Panc1 (cell line): ENCODE measurements at regions of chr5 and their contacts with region 1.

Region 1: GRCh38 chr5:151115274-151115905 is 34.6 kb upstream of the TNIP1 start:
- DNase-seq: no peak
- ATAC-seq: peak; percentile 91
- H3K4me3 ChIP-seq: no peak overlapping the region
- H3K27ac ChIP-seq: no peak overlapping the region
- H3K4me1 ChIP-seq: no peaks in the 10 kb centered on the region
- H3K27me3 ChIP-seq: no peaks in the 10 kb centered on the region
- CTCF ChIP-seq: peak; percentile 97

Region 2: DNA sequence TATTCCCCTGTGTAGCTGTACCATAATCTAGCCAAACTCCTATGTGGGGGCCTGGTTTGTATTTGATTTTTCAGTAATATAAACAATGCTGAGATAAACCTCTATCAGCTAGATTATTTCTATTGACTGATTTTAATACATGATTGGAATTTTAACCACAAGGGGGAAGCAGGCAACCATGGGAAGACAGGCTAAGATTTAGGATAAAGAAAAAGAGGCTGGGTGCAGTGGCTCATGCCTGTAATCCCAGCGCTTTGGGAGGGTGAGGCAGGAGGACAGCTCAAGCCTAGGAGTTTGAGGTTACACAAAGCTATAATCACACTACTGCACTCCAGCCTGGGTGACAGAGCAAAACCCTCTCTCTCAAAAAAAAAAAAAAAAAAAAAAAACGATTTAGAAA is 113.1 kb before region 1 on chr5:
- CTCF ChIA-PET with region 1: interaction called, 17 read pairs
- POLR2A ChIA-PET with region 1: no interaction called
- in situ Hi-C with region 1: no loop called
- intact Hi-C with region 1: loop called (anchors 1 kb)
- DNase-seq: no peak
- ATAC-seq: peak; percentile 60
- H3K4me3 ChIP-seq: no peak overlapping the region
- H3K27ac ChIP-seq: no peak overlapping the region
- H3K4me1 ChIP-seq: no peaks in the 10 kb centered on the region
- H3K27me3 ChIP-seq: no peaks in the 10 kb centered on the region
- CTCF ChIP-seq: peak; percentile 73

Region 3: DNA sequence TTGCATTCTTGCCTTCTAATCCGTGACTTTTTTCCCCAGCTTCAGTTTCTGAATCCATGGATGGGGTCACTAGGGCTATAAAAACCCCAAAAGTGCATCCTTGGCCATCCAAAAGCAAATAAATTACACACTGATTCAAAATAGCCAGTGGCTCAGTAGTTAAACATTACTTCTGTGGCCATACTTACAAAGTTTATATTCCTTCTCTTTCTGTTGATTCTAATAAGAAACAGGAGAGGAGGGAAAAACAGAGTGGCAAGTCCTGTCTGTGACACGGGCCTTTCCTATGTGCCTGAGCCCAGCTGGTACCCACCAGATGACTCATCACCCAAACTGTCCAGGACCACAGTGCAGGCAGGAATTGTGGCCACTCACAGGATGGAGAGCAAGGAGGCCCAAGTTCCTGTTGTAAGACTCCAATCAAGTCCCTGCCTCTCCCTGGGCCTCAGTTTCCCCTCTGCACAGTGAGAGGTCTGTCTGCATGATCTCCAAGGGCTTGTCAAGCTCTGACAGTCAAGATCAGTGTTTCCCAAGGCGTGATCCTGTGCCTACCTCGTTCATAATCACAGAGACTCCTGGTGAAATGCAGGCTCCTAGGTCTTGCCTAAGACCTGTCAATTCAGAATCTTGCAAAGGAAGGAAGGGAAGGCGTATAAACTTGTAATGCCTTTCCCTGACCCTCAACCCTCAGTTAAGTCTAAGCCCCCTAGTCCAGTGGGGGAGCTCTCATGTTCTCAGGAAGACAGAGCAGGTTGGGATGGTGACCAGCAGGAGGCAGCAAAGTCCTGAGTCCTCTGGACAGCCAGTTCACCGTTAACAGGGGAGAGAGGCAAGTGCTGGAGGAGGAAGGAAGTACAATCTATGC is 64.1 kb before region 1 on chr5:
- CTCF ChIA-PET with region 1: interaction called, 56 read pairs
- POLR2A ChIA-PET with region 1: interaction called, 3 read pairs
- in situ Hi-C with region 1: no loop called
- intact Hi-C with region 1: loop called (anchors 1 kb)
- DNase-seq: no peak
- ATAC-seq: peak; percentile 91
- H3K4me3 ChIP-seq: no peak overlapping the region
- H3K27ac ChIP-seq: no peak overlapping the region
- H3K4me1 ChIP-seq: no peaks in the 10 kb centered on the region
- H3K27me3 ChIP-seq: no peaks in the 10 kb centered on the region
- CTCF ChIP-seq: peak; percentile 89

Region 4: DNA sequence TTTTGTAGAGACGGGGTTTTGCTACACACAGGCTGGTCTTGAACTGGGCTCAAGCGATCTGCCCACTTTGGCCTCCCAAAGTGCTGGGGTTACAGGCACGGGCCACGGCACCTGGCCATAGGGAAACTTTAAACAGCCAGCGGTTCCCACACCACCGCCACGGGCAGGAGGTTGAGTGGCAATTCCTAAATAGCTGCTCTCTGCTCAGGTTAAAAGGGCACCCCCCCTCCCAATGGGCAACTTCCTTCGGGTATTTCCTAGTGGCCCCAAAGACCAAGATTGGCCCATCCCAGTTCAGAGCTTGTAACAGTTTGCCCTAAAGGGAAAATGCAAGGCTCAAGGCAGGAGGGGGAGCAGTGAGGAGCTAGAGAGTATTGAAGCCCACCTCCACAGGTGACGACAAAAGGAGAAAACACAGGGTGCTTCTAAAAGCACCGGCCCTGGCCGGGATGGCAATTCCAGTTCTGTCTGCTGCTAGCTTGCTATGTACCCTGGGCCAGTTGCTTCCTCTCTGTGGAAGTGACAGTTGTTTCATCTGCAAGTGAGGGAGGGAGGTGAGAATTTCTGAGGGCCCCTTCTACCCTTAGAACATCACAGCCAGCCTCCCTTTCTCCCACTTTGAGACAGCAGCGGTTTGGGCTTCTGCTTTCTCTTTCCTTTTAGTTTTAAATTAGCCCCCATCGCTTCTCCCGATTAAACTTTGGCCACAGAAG is 17.4 kb before region 1 on chr5:
- CTCF ChIA-PET with region 1: no interaction called
- POLR2A ChIA-PET with region 1: no interaction called
- in situ Hi-C with region 1: no loop called
- intact Hi-C with region 1: no loop called
- DNase-seq: no peak
- ATAC-seq: no peak
- H3K4me3 ChIP-seq: no peak overlapping the region
- H3K27ac ChIP-seq: no peak overlapping the region
- H3K4me1 ChIP-seq: peaks cover 8% of the 10 kb centered on the region; the same call in 1 of the 2 replicates
- H3K27me3 ChIP-seq: no peaks in the 10 kb centered on the region
- CTCF ChIP-seq: no peak

Region 5: GRCh38 chr5:151126199-151126645 is 10.8 kb after region 1 on chr5:
- CTCF ChIA-PET with region 1: interaction called, 12 read pairs
- POLR2A ChIA-PET with region 1: no interaction called
- in situ Hi-C with region 1: no loop called
- intact Hi-C with region 1: no loop called
- DNase-seq: peak; percentile 54
- ATAC-seq: peak; percentile 90
- H3K4me3 ChIP-seq: no peak overlapping the region
- H3K27ac ChIP-seq: no peak overlapping the region
- H3K4me1 ChIP-seq: no peaks in the 10 kb centered on the region
- H3K27me3 ChIP-seq: no peaks in the 10 kb centered on the region
- CTCF ChIP-seq: peak; percentile 87

Region 6: GRCh38 chr5:151328734-151329133 is 213.3 kb after region 1 on chr5:
- CTCF ChIA-PET with region 1: no interaction called
- POLR2A ChIA-PET with region 1: no interaction called
- in situ Hi-C with region 1: no loop called
- intact Hi-C with region 1: no loop called
- DNase-seq: no peak
- ATAC-seq: no peak
- H3K4me3 ChIP-seq: no peak overlapping the region
- H3K27ac ChIP-seq: no peak overlapping the region
- H3K4me1 ChIP-seq: no peaks in the 10 kb centered on the region
- H3K27me3 ChIP-seq: peaks cover 8% of the 10 kb centered on the region
- CTCF ChIP-seq: no peak